HEK293T (cell line): ENCODE measurements at regions of chr18 and their contacts with region 1.

Region 1: GRCh38 chr18:23903971-23904370 is 110.6 kb upstream of the TTC39C start:
- DNase-seq: no peak

Region 2: GRCh38 chr18:23918401-23919032 is 14.5 kb after region 1 on chr18:
- CTCF ChIA-PET with region 1: interaction called, 13 read pairs
- POLR2A ChIA-PET with region 1: no interaction called
- DNase-seq: peak; percentile 79